ENCODE measurements at regions of chr1 and their contacts with region 1.

Region 1: DNA sequence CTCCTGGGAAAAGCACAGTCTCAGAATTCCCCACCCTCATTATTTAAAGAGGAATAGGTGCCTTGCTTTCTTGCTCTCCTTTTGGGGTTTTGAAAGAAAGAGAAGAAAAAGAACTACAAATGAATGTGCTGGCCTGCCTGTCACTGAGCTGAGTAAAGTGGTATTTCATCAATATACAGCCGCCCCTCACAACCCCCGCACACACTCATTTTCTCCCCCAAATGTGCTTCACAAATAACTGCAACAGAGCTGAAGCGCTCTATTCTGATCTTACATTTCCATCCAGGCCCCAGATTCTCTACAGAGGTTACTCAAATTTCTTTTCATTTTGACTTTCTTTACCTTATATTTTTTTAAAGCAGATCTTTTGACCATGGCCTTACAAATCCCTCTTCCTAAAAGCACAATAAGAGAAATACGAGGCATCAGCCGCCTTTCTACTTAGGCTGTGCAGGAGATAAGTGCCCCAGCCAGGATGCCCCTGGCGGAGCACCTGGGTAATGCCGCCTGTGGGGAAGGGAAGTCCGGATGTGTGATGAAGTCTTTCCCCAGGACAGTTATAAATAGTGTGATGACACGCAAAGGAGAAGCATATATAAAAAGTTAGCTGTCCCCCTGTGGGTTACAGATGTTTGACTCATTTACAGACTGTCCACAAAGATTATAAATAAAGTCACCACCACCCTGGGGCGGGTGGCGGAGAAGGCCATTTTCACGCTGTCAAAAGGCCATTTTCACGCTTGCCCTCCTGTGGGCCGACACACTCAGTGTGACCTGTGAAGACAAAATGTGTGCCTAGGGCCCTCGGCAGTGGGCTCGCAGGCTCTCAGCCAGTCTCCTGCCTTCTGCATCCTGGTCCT is 6.5 kb downstream of the KCNN3 start:
- DNase-seq: peak; percentile 74
- H3K4me3 Mint-ChIP-seq: no peak overlapping the region
- H3K27ac Mint-ChIP-seq: peak overlapping the region; percentile 76
- H3K4me1 Mint-ChIP-seq: peaks cover 38% of the 10 kb centered on the region
- H3K27me3 Mint-ChIP-seq: peaks cover 29% of the 10 kb centered on the region

Region 2: DNA sequence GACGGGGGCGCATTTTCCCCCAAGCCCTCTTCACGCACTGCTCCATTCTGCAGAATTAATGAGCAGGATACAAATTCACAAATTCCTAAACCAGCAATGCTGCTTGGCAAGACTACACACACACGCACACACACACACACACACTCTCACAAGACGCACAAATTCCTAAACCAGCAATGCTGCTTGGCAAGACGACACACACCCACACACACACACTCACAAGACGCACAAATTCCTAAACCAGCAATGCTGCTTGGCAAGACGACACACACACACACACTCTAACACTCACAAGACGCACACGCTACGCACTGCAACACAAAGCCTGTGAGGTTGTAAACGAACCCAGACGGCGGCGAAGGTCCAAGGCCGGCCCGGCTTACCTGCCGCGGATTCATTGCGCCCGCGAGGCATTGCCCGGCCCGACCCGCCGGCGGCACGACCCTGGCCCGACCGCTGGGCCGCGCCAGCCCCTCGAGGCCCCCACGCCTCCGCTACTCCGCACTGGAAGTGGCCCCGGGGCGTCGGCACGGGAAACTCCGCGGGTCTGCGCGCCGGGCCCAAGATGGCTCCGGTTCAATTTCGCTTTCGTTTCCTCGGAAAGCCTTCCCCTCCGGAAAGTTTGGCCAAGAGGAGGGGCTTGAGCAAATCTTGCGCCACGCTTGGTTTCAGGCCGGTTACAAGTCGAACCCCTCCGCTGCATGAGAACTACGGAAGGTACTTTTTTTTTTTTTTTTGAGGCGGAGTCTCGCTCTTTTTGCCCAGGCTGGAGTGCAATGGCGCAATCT is 255.7 kb before region 1 on chr1 and contains the start of gene ADAR:
- CTCF ChIA-PET with region 1: interaction called, 3 read pairs
- POLR2A ChIA-PET with region 1: no interaction called
- intact Hi-C with region 1: loop called (anchors 5 kb)
- DNase-seq: peak; percentile 96
- H3K4me3 Mint-ChIP-seq: peak within 1 kb of the TSS; percentile 90
- H3K27ac Mint-ChIP-seq: peak within 1 kb of the TSS; percentile 98
- H3K4me1 Mint-ChIP-seq: peaks cover 71% of the 10 kb centered on the region
- H3K27me3 Mint-ChIP-seq: no peaks in the 10 kb centered on the region
- total RNA-seq, gene ADAR: 270 to 289 TPM

Region 3: GRCh38 chr1:154730259-154730658 is 133.3 kb before region 1 on chr1:
- CTCF ChIA-PET with region 1: no interaction called
- POLR2A ChIA-PET with region 1: no interaction called
- intact Hi-C with region 1: loop called (anchors 5 kb)
- DNase-seq: no peak
- H3K4me3 Mint-ChIP-seq: no peak overlapping the region
- H3K27ac Mint-ChIP-seq: no peak overlapping the region
- H3K4me1 Mint-ChIP-seq: peaks cover 41% of the 10 kb centered on the region
- H3K27me3 Mint-ChIP-seq: peaks cover 16% of the 10 kb centered on the region

Region 4: DNA sequence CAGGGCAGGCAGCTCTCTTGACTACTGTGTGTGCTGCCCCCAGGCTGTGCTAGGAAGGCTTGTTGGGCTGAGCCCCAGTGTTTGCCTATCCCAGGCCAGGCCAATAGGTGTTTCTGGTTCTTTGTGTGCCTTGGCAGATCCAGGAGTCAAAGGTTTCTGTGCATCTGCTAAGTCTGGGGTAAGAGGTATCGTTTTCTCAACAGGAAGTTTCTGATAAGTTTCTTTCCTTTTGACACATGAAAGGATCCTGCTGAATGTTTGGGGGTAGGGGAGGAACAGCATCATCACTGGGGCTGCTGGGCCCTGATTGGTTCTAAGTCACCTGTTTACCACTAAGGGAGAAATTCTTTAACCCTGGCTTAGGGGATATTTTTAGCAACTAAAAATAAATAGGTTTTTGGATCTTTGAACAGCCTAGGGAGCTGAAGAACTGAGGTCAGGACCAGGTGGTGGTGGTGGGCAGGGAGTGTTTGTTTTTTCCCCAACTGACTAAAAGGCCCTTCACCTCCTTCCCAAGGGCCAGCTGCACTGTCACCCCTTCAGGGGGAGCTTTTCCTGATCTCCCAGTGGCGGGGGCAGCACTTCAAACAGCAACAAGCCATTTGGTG is 78.5 kb before region 1 on chr1:
- CTCF ChIA-PET with region 1: no interaction called
- POLR2A ChIA-PET with region 1: interaction called, 3 read pairs
- intact Hi-C with region 1: loop called (anchors 2 kb)
- DNase-seq: peak; percentile 78
- H3K4me3 Mint-ChIP-seq: peak overlapping the region; percentile 49
- H3K27ac Mint-ChIP-seq: peak overlapping the region; percentile 86
- H3K4me1 Mint-ChIP-seq: peaks cover 31% of the 10 kb centered on the region
- H3K27me3 Mint-ChIP-seq: no peaks in the 10 kb centered on the region

Region 5: GRCh38 chr1:154837672-154838171 is 25.8 kb before region 1 on chr1:
- CTCF ChIA-PET with region 1: no interaction called
- POLR2A ChIA-PET with region 1: no interaction called
- intact Hi-C with region 1: no loop called
- DNase-seq: no peak
- H3K4me3 Mint-ChIP-seq: no peak overlapping the region
- H3K27ac Mint-ChIP-seq: no peak overlapping the region
- H3K4me1 Mint-ChIP-seq: no peaks in the 10 kb centered on the region
- H3K27me3 Mint-ChIP-seq: peaks cover 1% of the 10 kb centered on the region

Region 6: GRCh38 chr1:154847891-154848290 is 15.7 kb before region 1 on chr1:
- CTCF ChIA-PET with region 1: interaction called, 3 read pairs
- POLR2A ChIA-PET with region 1: interaction called, 4 read pairs
- intact Hi-C with region 1: loop called (anchors 1 kb)
- DNase-seq: no peak
- H3K4me3 Mint-ChIP-seq: no peak overlapping the region
- H3K27ac Mint-ChIP-seq: no peak overlapping the region
- H3K4me1 Mint-ChIP-seq: peaks cover 16% of the 10 kb centered on the region
- H3K27me3 Mint-ChIP-seq: peaks cover 10% of the 10 kb centered on the region

Region 7: GRCh38 chr1:154878371-154879022 is 15.0 kb after region 1 on chr1:
- CTCF ChIA-PET with region 1: interaction called, 23 read pairs
- POLR2A ChIA-PET with region 1: no interaction called
- intact Hi-C with region 1: no loop called
- DNase-seq: peak; percentile 84
- H3K4me3 Mint-ChIP-seq: no peak overlapping the region
- H3K27ac Mint-ChIP-seq: no peak overlapping the region
- H3K4me1 Mint-ChIP-seq: peaks cover 14% of the 10 kb centered on the region
- H3K27me3 Mint-ChIP-seq: peaks cover 3% of the 10 kb centered on the region

Region 8: DNA sequence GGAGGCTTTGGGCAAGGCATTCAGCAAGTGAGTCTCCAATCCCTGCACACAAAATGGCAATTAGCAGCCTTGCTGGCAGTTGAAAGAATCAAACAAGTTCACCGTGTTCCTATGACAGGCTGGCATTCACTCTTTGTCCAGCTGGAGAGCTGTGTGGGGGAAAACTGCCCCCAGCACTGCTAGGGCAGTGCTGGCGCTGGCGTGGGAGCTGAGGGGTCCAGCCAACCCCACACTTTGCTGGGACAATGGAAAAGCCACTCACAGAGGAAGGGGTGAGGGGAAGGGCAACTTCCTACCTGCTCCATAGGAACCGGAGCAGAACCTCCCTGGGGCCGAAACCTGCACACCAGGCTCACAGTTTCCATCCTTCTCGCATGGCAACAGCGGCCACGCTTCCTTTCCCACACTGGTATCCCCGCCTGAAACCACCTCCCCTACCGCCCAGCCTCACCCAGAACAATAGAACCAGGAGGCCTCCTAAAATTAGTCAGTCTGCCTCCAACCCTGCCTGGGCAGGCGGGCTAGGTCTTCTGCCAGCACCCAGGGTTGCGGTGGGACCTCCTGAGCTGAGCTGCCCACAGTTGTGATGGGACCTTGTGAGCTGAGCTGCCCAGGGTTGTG is 33.3 kb after region 1 on chr1:
- CTCF ChIA-PET with region 1: no interaction called
- POLR2A ChIA-PET with region 1: no interaction called
- intact Hi-C with region 1: no loop called
- DNase-seq: no peak
- H3K4me3 Mint-ChIP-seq: no peak overlapping the region
- H3K27ac Mint-ChIP-seq: no peak overlapping the region
- H3K4me1 Mint-ChIP-seq: no peaks in the 10 kb centered on the region
- H3K27me3 Mint-ChIP-seq: no peaks in the 10 kb centered on the region

Measured in activated CD4-positive, alpha-beta memory T cell treated with anti-CD3 and anti-CD28 coated beads for 36 hours (primary cell).